Activated CD8-positive, alpha-beta T cell treated with anti-CD3 and anti-CD28 coated beads for 36 hours (primary cell): ENCODE measurements at regions of chr21 and their contacts with region 1.

Region 1: DNA sequence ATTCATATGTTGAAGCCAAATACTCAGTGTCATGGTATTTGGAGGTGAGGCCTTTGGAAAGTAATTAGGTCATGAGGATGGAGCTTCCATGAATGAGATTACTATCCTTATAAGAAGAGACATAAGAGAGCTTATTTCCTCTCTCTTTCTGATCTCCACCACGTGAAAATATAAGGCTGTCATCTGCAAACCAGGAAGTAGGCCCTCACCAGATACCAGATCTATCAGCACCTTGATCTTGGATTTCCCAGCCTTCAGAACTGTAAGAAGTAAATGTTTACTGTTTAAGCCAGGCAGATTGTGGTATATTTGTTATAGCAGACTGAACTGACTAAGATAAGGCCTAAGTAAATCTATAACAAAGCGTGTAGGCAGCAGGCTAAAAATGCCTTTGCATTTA is 25.3 kb downstream of the RBM11 start:
- DNase-seq: no peak
- ATAC-seq: no peak
- H3K4me3 Mint-ChIP-seq: no peak overlapping the region
- H3K27ac Mint-ChIP-seq: no peak overlapping the region
- H3K4me1 Mint-ChIP-seq: no peaks in the 10 kb centered on the region
- H3K27me3 Mint-ChIP-seq: peaks cover 2% of the 10 kb centered on the region
- CTCF ChIP-seq: no peak

Region 2: GRCh38 chr21:14251336-14251735 is 10.0 kb after region 1 on chr21:
- CTCF ChIA-PET with region 1: interaction called, 14 read pairs
- POLR2A ChIA-PET with region 1: no interaction called
- intact Hi-C with region 1: no loop called
- DNase-seq: no peak
- ATAC-seq: no peak
- H3K4me3 Mint-ChIP-seq: no peak overlapping the region
- H3K27ac Mint-ChIP-seq: no peak overlapping the region
- H3K4me1 Mint-ChIP-seq: peaks cover 5% of the 10 kb centered on the region
- H3K27me3 Mint-ChIP-seq: peaks cover 12% of the 10 kb centered on the region
- CTCF ChIP-seq: no peak